Naive thymus-derived CD4-positive, alpha-beta T cell (primary cell): ENCODE measurements at regions of chr6 and their contacts with region 1.

Region 1: DNA sequence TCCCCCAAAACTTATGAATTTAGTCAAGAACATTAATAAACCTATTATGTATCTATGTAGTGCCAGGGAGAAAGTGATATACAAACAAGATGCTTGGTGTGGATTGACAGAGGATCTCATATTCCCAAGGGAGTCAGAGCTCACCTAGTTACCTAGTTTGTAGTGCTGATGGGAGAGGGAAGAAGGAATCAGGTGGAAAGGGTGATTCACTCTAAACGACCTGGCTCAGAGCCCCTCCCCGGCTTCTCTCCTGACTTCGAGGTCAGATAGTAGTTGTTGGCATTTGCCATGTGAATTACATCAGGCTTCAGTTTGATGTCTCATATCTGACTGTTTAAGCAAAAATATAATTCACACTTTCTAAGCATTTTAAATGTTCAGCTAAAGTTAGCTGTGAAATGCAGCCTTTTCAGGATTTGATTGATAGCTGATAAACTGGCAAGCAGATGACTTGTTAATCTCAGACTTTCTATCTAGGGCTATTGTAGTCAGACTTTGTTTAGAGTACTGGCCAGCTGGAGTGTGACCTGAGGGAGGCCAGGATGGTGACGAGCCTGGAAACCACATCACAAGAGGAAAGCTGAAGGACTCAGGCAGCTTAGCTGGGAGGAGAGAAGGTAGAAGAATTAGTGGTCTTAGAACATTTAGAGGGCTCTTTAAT is 123.7 kb downstream of the AKAP7 start:
- DNase-seq: no peak
- ATAC-seq: no peak
- H3K4me3 ChIP-seq: no peak overlapping the region
- H3K4me3 Mint-ChIP-seq: no peak overlapping the region
- H3K27ac ChIP-seq: no peak overlapping the region
- H3K27ac Mint-ChIP-seq: peak overlapping the region in 7 of 9 donors; percentile 1 to 94 (median 63)
- H3K4me1 ChIP-seq: peaks cover 0 to 11% of the 10 kb centered on the region in 2 donors
- H3K4me1 Mint-ChIP-seq: peaks cover 3 to 53% (median 37%) of the 10 kb centered on the region in 7 donors
- H3K27me3 ChIP-seq: no peaks in the 10 kb centered on the region
- H3K27me3 Mint-ChIP-seq: no peaks in the 10 kb centered on the region

Region 2: GRCh38 chr6:131173680-131174079 is 85.3 kb before region 1 on chr6:
- CTCF ChIA-PET with region 1: no interaction called
- POLR2A ChIA-PET with region 1: interaction called, 11 read pairs
- intact Hi-C with region 1: no loop called
- DNase-seq: no peak
- ATAC-seq: no peak
- H3K4me3 ChIP-seq: no peak overlapping the region
- H3K4me3 Mint-ChIP-seq: no peak overlapping the region
- H3K27ac ChIP-seq: no peak overlapping the region
- H3K27ac Mint-ChIP-seq: no peak overlapping the region
- H3K4me1 ChIP-seq: no peaks in the 10 kb centered on the region
- H3K4me1 Mint-ChIP-seq: no peaks in the 10 kb centered on the region
- H3K27me3 ChIP-seq: no peaks in the 10 kb centered on the region
- H3K27me3 Mint-ChIP-seq: no peaks in the 10 kb centered on the region

Region 3: DNA sequence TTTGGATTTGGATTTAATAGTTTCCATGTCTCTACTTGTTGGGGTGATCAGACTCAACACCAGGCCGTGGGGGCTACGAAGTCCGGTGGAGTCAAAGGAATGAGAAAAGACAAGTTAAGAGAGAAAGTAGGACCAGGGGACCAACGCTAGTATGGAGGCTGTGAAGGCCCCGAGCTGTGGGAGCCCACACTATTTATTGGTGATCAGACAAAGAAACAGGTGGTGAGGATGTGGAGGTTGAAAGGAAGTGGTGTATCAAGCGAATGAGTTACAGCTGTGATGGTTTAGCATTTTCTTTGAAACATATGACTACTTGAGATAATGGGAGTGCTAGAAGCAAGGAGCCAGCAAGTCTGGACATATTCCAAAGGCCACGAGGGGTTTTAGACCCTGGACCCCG is 61.2 kb before region 1 on chr6:
- CTCF ChIA-PET with region 1: no interaction called
- POLR2A ChIA-PET with region 1: no interaction called
- intact Hi-C with region 1: no loop called
- DNase-seq: peak in 7 of 9 donors; percentile 14 to 69 (median 60)
- ATAC-seq: no peak
- H3K4me3 ChIP-seq: no peak overlapping the region
- H3K4me3 Mint-ChIP-seq: peak overlapping the region; percentile 54 to 83 (median 68)
- H3K27ac ChIP-seq: peak overlapping the region; percentile 54
- H3K27ac Mint-ChIP-seq: peak overlapping the region; percentile 86 to 99 (median 97)
- H3K4me1 ChIP-seq: peaks cover 39 to 40% of the 10 kb centered on the region in 2 donors
- H3K4me1 Mint-ChIP-seq: peaks cover 25 to 54% (median 43%) of the 10 kb centered on the region in 7 donors
- H3K27me3 ChIP-seq: no peaks in the 10 kb centered on the region
- H3K27me3 Mint-ChIP-seq: peaks cover 0 to 3% (median 0%) of the 10 kb centered on the region in 5 donors

Region 4: DNA sequence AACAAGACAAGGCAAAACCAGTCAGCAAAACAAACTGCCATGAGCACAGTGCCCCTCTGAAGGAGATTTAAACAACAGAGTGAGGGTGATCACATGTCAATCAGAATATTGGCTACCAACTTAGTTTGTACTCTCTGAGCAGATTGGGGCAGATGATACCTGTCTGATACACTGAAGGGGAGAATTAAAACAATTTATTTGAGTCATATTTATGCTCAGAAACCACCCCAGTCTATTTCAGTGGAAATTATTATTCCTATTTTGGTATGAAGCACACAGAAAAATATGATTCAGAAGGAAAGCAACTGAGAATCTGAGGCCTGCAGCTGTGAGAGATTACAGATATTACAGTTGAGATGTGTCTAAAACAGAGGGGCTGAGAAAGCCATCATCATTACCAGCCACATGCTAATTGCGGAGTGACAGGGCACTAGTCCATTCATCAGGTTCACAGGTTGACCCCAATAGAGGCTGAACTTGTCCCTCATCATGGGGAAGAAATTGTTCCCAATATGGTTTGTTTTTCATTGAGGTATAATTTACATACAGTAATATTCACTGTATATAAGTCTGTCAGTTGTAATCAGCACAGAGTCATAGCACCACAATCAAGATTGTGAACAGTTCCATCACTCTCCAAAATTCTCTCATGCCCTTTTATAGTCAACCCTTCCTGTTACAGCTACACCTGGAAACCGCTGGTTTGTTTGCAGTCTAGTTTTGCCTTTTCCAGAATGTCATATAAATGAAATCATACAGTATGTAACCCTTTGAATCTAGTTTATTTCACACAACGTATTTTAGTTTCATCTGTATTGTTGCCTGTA is 10.8 kb after region 1 on chr6:
- CTCF ChIA-PET with region 1: interaction called, 9 read pairs
- POLR2A ChIA-PET with region 1: interaction called, 4 read pairs
- intact Hi-C with region 1: loop called in 1 of 2 experiments (anchors 1 kb)
- DNase-seq: no peak
- ATAC-seq: no peak
- H3K4me3 ChIP-seq: no peak overlapping the region
- H3K4me3 Mint-ChIP-seq: no peak overlapping the region
- H3K27ac ChIP-seq: no peak overlapping the region
- H3K27ac Mint-ChIP-seq: peak overlapping the region in 6 of 9 donors; percentile 17 to 63 (median 38)
- H3K4me1 ChIP-seq: no peaks in the 10 kb centered on the region
- H3K4me1 Mint-ChIP-seq: peaks cover 0 to 53% (median 39%) of the 10 kb centered on the region in 7 donors
- H3K27me3 ChIP-seq: no peaks in the 10 kb centered on the region
- H3K27me3 Mint-ChIP-seq: no peaks in the 10 kb centered on the region